AG04449 (cell line): ENCODE measurements at regions of chr13 and their contacts with region 1.

Region 1: DNA sequence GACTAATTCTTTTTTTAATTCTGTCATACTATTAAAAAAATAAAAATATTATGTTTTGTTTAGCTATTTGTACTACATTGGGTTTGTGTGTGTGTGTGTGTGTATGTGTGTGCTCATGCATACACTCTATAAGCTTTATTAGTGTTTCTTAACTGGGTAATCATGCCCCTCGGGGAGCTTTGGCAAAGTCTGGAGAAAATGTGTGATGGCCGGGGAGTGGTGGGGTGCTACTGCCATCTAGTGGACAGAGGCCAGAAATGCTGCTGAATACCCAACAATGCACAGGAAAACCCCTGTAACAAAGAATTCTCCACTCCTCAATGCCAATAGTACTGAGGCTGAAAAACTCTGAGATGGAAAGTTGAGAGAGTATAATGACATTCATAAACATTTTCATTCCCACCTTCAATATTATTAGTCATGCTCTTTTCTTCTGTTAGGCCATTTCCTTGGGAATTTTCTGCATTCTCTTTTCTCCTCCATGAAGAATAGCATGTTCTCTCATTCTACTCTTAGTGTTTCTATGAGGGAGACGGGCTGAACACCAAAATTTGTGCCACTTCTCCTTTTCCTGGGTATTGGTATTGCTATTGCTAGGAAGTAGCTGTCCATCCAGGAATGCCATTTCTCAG is 157.3 kb downstream of the DNAJC3 start:
- DNase-seq: peak; percentile 12
- H3K4me3 ChIP-seq: no peak overlapping the region
- CTCF ChIP-seq: peak; percentile 81

Region 2: DNA sequence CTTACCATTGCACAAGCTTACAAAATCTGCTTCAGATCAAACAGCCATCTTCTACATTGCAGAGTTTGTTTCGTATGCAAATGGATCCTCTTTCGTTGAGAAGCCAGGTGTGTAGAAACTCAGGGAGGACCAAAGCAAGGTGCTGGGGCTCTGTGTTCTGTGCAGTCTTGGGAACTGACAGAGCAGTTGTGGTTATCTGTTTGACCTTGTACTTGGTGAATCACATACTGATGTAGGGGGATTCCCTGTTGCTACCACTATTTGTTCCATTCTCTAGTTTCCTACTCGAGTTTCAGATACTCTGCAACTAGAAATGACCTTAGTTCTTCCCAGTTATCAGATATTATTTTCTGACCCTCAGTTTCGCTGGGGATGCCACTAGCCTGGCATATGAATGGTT is 377.0 kb before region 1 on chr13:
- CTCF ChIA-PET with region 1: no interaction called
- POLR2A ChIA-PET with region 1: no interaction called
- DNase-seq: no peak
- H3K4me3 ChIP-seq: no peak overlapping the region
- CTCF ChIP-seq: no peak

Region 3: DNA sequence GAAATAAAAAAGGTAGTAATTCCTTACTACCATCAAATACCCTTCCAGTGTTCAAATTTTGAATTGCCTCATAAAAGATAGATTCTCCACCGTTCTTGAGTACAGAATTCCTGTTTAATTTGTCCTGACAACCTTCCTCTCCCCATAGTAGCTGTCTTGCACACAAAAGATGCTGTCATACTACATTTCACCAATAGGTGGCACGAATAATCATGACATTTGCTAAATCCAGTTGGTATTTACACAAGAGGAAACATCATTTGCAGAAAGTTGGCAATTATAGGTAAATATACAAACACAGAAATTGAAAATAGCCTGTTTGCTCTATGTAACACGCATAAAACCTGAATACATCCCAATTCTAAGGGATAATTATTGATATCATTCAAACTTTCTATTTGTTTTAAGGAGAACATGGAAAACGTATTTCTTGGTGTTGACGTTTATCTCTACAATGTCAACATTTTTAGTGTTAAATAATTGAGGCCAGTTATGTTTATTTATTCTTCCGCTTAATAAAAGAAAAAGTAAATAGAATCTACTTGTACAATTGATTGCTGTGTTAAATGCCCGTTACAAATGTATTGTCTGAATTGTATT is 340.1 kb before region 1 on chr13:
- CTCF ChIA-PET with region 1: interaction called, 11 read pairs
- POLR2A ChIA-PET with region 1: no interaction called
- DNase-seq: no peak
- H3K4me3 ChIP-seq: no peak overlapping the region
- CTCF ChIP-seq: peak; percentile 59

Region 4: GRCh38 chr13:95624020-95624419 is 210.2 kb before region 1 on chr13:
- CTCF ChIA-PET with region 1: interaction called, 239 read pairs
- POLR2A ChIA-PET with region 1: no interaction called
- DNase-seq: no peak
- H3K4me3 ChIP-seq: no peak overlapping the region
- CTCF ChIP-seq: peak; percentile 53

Region 5: DNA sequence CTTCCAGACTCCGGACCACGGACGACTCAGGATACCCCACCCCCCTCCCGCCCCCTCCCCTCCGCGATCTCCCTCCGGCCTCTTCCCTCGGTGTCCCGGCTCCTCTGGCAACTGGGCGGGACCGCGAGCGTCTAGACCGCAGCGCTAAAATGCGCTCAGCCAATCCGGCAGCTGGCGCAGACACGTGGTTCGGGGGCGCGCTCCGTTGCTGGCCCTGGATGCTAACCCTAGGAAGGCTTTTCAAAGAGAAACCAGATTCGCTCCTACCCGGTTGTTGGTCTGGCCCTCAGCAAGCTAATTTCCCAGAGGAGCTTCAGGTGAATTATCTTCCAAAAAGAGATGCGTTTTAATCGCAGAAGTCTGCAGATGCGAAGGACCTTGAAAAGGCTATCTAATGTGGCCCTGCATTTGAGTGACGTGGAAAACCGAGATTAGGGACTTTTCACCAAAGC is 189.6 kb before region 1 on chr13 and contains the start of gene DZIP1:
- CTCF ChIA-PET with region 1: interaction called, 25 read pairs
- POLR2A ChIA-PET with region 1: no interaction called
- DNase-seq: no peak
- H3K4me3 ChIP-seq: peak within 1 kb of the TSS; percentile 70
- CTCF ChIP-seq: no peak

Region 6: GRCh38 chr13:95809429-95809828 is 24.8 kb before region 1 on chr13:
- CTCF ChIA-PET with region 1: interaction called, 125 read pairs
- POLR2A ChIA-PET with region 1: no interaction called
- DNase-seq: no peak
- H3K4me3 ChIP-seq: no peak overlapping the region
- CTCF ChIP-seq: no peak

Region 7: DNA sequence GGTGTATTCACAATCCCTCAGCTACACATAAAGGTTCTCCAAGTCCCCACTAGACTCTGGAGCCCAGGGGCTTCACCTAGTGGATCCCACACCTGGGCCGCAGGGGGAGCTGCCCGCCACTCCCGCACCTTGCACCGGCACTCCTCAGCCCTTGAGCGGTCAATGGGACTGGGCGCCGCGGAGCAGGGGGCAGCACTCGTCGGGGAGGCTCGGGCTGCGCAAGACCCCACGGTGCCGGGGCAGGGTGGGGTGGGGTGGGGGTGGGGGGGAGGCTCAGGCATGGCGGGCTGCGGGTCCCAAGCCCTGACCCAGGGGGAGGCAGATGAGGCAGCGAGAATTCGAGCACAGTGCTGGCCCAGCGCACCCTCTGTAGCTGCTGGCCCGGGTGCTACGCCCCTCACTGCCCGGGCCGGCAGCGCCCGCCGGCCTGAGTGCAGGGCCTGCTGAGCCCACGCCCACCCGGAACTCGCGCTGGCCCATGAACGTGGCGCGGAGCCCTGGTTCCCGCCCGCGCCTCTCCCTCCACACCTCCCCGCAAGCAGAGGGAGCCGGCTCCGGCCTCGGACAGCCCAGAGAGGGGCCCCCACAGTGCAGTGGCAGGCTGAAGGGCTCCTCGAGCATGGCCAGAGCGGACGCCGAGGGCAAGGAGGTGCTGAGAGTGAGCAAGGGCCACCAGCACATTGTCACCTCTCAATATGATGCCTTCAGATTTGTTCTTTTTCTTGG is 97.2 kb after region 1 on chr13:
- CTCF ChIA-PET with region 1: no interaction called
- POLR2A ChIA-PET with region 1: no interaction called
- DNase-seq: no peak
- H3K4me3 ChIP-seq: no peak overlapping the region
- CTCF ChIP-seq: no peak

Region 8: DNA sequence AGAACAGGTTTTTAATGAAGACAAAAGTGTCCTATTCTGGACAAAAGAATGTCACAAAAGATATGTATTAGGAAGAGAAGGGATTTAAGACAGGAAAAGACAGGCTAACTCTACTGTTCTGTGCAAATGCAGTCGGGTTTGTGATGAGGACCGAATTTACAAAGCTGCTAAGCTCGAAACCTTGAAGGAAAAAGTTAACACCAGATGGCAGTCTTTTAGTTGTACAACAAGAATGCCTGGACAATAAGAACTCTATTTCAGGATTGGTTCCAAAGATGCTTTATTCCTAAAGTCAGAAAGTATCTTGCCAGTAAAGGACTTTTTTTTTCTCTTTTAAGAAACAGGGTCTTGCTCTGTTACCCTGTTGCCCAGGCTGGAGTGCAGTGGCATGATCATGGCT is 306.8 kb after region 1 on chr13:
- CTCF ChIA-PET with region 1: no interaction called
- POLR2A ChIA-PET with region 1: no interaction called
- DNase-seq: peak; percentile 2
- H3K4me3 ChIP-seq: no peak overlapping the region
- CTCF ChIP-seq: no peak